PC-9 (cell line): ENCODE measurements at regions of chr17 and their contacts with region 1.

Region 1: GRCh38 chr17:7435221-7435675 is at the start of gene TMEM102:
- DNase-seq: peak; percentile 92 to 99
- H3K4me3 ChIP-seq: peak within 1 kb of the TSS; percentile 57
- H3K27ac ChIP-seq: peak within 1 kb of the TSS; percentile 68
- H3K4me1 ChIP-seq: 0 out of 2 replicates have a peak, but pooled peaks cover 7% of the 10 kb centered on the region
- H3K27me3 ChIP-seq: no peaks in the 10 kb centered on the region
- CTCF ChIP-seq: no peak
- total RNA-seq, gene TMEM102: 17.0 and 20.7 TPM in 2 replicates

Region 2: GRCh38 chr17:7351665-7352501 is 83.4 kb before region 1 on chr17 and contains the start of gene KCTD11:
- CTCF ChIA-PET with region 1: interaction called, 8 read pairs
- POLR2A ChIA-PET with region 1: no interaction called
- intact Hi-C with region 1: loop called (anchors 1 kb)
- DNase-seq: peak; percentile 92 to 99
- H3K4me3 ChIP-seq: peak within 1 kb of the TSS; percentile 86
- H3K27ac ChIP-seq: peak within 1 kb of the TSS; percentile 98
- H3K4me1 ChIP-seq: peaks cover 28% of the 10 kb centered on the region
- H3K27me3 ChIP-seq: no peaks in the 10 kb centered on the region
- CTCF ChIP-seq: no peak; the same call in 1 of the 2 replicates
- total RNA-seq, gene KCTD11: 16.4 and 18.3 TPM in 2 replicates

Region 3: GRCh38 chr17:7484067-7484918 is 49.0 kb after region 1 on chr17 and contains the start of gene POLR2A:
- CTCF ChIA-PET with region 1: interaction called, 3 read pairs
- POLR2A ChIA-PET with region 1: interaction called, 26 read pairs
- intact Hi-C with region 1: loop called (anchors 1 kb)
- DNase-seq: peak; percentile 79 to 99
- H3K4me3 ChIP-seq: peak within 1 kb of the TSS; percentile 88
- H3K27ac ChIP-seq: peak within 1 kb of the TSS; percentile 95
- H3K4me1 ChIP-seq: peaks cover 18% of the 10 kb centered on the region
- H3K27me3 ChIP-seq: no peaks in the 10 kb centered on the region
- CTCF ChIP-seq: no peak
- total RNA-seq, gene POLR2A: 149 and 166 TPM in 2 replicates

Region 4: GRCh38 chr17:7523033-7523432 is 87.8 kb after region 1 on chr17:
- CTCF ChIA-PET with region 1: interaction called, 17 read pairs
- POLR2A ChIA-PET with region 1: no interaction called
- intact Hi-C with region 1: no loop called
- DNase-seq: no peak
- H3K4me3 ChIP-seq: no peak overlapping the region
- H3K27ac ChIP-seq: no peak overlapping the region
- H3K4me1 ChIP-seq: no peaks in the 10 kb centered on the region
- H3K27me3 ChIP-seq: no peaks in the 10 kb centered on the region
- CTCF ChIP-seq: peak; percentile 52

Region 5: DNA sequence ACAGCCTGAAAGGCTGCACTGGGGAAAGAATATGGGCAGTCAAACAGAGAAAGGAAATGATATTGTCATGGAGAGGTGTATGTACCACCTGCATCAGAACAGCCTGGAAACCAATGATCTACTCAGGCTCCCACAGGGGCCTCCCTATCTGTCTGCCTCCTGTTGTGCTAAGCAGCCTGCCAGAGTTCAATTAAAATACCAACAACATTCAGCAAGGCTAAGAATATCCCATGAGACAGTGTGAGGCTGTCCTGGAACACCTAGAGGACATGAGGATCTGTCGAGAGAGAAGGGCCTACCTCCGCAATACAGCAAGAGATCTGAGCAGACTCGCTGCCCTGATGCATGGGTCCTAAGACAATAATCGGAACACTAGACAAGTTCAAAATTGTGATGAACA is 171.0 kb after region 1 on chr17:
- CTCF ChIA-PET with region 1: no interaction called
- POLR2A ChIA-PET with region 1: interaction called, 14 read pairs
- intact Hi-C with region 1: no loop called
- DNase-seq: no peak
- H3K4me3 ChIP-seq: no peak overlapping the region
- H3K27ac ChIP-seq: no peak overlapping the region
- H3K4me1 ChIP-seq: no peaks in the 10 kb centered on the region
- H3K27me3 ChIP-seq: no peaks in the 10 kb centered on the region
- CTCF ChIP-seq: no peak